Left ventricle myocardium inferior (tissue), 1 donor: ENCODE measurements at regions of chr14 and their contacts with region 1.

Region 1: GRCh38 chr14:93655078-93655750 is 133.1 kb downstream of the PRIMA1 start:
- DNase-seq: no peak
- H3K4me3 ChIP-seq: no peak overlapping the region
- H3K27ac ChIP-seq: no peak overlapping the region
- H3K4me1 ChIP-seq: no peaks in the 10 kb centered on the region
- H3K27me3 ChIP-seq: peaks cover 22% of the 10 kb centered on the region
- CTCF ChIP-seq: peak; percentile 66

Region 2: GRCh38 chr14:93510066-93510465 is 145.1 kb before region 1 on chr14:
- intact Hi-C with region 1: no loop called
- DNase-seq: no peak
- H3K4me3 ChIP-seq: no peak overlapping the region
- H3K27ac ChIP-seq: no peak overlapping the region
- H3K4me1 ChIP-seq: no peaks in the 10 kb centered on the region
- H3K27me3 ChIP-seq: no peaks in the 10 kb centered on the region
- CTCF ChIP-seq: no peak

Region 3: DNA sequence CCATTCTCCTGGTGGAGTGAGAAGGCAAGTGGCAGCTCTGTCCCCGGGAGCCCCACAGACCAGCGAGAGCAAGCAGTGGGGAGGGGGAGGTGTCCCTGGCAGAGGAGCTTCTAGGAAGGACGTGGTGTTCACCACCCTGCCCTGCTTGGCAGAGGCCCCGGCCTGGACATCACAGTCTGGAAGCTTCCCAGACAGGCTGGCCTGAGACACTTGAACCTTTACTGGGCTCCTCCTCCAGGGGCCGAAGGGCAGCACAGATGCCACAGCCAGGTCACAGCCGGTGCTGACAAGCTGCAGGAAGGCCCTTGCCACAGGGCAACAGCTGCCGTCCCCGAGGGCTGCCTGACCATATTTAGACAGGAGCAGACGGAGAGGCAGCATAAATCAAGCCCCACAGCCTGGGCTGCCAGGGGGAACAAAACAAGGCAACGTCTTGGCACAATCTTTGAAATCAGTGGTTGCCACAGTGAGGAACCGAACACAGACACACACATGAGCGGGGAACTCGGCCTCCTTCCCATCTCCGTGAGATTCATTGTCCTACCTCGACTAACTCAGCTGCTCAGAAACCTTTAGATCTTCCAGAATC is 104.6 kb after region 1 on chr14:
- intact Hi-C with region 1: no loop called
- DNase-seq: peak; percentile 68
- H3K4me3 ChIP-seq: peak overlapping the region; percentile 6
- H3K27ac ChIP-seq: peak overlapping the region; percentile 69
- H3K4me1 ChIP-seq: peaks cover 37% of the 10 kb centered on the region
- H3K27me3 ChIP-seq: no peaks in the 10 kb centered on the region
- CTCF ChIP-seq: no peak

Region 4: DNA sequence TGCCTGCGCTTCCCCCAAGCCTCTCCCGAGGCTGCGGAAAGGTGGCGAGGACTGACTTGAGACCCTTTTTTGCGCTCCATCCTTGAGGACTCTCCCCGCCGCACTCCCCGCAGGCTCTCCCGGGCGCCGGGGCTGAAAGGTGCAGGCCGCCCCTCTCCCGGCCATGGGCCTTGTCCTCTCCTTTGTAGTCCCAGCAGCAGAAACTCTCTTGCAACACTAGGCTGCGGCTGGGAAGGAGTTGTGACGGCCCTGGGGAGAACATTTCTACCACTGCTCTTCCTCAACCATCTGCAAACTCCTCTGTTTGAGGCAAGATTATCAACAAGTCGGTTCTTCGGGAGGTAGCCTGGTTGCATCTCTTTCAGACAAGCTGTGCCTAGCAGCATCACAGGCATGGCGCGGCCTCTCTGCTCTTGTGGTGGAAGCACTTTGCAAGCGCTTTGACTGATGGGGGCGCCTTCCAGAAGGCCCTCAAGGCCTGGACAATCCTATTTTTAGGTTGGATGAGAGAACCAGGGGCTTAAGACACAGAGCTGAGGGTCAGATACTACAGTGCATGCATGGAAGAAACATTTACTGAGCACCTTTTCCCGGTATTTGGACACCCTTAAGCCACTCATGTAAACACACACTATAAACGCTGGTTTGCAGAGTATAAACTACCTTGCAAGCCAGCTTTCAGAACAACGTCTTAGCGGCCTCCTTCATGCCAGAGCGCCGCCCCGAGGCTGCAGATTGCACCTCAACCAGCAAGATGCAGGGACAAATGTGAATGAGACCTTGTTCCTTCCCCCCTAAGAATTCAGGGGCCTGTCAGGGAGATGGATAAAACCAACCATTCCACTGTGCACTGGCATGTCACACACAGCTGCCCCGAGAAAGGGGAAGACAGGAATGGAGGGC is 134.3 kb after region 1 on chr14:
- intact Hi-C with region 1: loop called (anchors 10 kb)
- DNase-seq: no peak
- H3K4me3 ChIP-seq: peak overlapping the region; percentile 74
- H3K27ac ChIP-seq: peak overlapping the region; percentile 85
- H3K4me1 ChIP-seq: peaks cover 28% of the 10 kb centered on the region
- H3K27me3 ChIP-seq: peaks cover 57% of the 10 kb centered on the region
- CTCF ChIP-seq: no peak

Region 5: GRCh38 chr14:93892923-93893558 is 237.8 kb after region 1 on chr14:
- intact Hi-C with region 1: loop called (anchors 5 kb)
- DNase-seq: peak; percentile 71
- H3K4me3 ChIP-seq: peak overlapping the region; percentile 10
- H3K27ac ChIP-seq: no peak overlapping the region
- H3K4me1 ChIP-seq: peaks cover 7% of the 10 kb centered on the region
- H3K27me3 ChIP-seq: peaks cover 20% of the 10 kb centered on the region
- CTCF ChIP-seq: peak; percentile 99